Gastrocnemius medialis (tissue), 4 donors: ENCODE measurements at regions of chr3 and their contacts with region 1.

Region 1: DNA sequence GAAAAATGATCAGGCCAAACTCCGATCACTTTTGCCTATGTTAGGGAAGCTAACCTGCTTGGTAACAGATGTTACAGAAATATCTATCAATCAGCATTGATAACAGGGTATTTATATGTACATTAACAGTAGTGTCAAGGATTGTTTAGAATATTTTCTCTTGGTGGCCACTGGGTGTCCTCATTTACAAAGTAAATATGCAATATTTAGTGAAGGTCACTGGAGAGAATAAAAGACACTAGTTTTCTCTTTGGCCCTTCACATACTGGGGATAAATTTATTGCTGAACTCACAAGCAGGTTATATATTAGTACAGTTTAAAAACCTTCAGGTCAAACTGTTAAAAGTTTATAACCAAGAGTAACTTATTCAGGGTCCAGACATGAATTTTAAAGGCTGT is 69.0 kb downstream of the TIGIT start:
- DNase-seq: no peak
- ATAC-seq: peak in 1 of 2 donors; percentile 16
- H3K4me3 ChIP-seq: no peak overlapping the region
- H3K27ac ChIP-seq: peak overlapping the region; percentile 79 to 83 (median 81)
- H3K4me1 ChIP-seq: peaks cover 53 to 60% of the 10 kb centered on the region in 2 donors
- H3K27me3 ChIP-seq: no peaks in the 10 kb centered on the region
- CTCF ChIP-seq: peak; percentile 36 to 57 (median 48)
- POLR2A ChIP-seq: no peak

Region 2: GRCh38 chr3:113441051-113441770 is 921.6 kb before region 1 on chr3 and contains the start of gene CFAP44:
- in situ Hi-C with region 1: no loop called
- intact Hi-C with region 1: no loop called
- DNase-seq: peak; percentile 2 to 39
- ATAC-seq: peak in 1 of 2 donors; percentile 27
- H3K4me3 ChIP-seq: peak within 1 kb of the TSS; percentile 15 to 28 (median 22)
- H3K27ac ChIP-seq: no peak within 1 kb of the TSS
- H3K4me1 ChIP-seq: no peaks in the 10 kb centered on the region
- H3K27me3 ChIP-seq: no peaks in the 10 kb centered on the region
- CTCF ChIP-seq: no peak
- POLR2A ChIP-seq: no peak
- total RNA-seq, gene CFAP44: 0.40 to 2.3 (median 0.97) TPM

Region 3: GRCh38 chr3:113745273-113746068 is 617.3 kb before region 1 on chr3:
- in situ Hi-C with region 1: no loop called
- intact Hi-C with region 1: no loop called
- DNase-seq: peak; percentile 81 to 86
- ATAC-seq: peak; percentile 69 to 81
- H3K4me3 ChIP-seq: peak overlapping the region; percentile 87 to 97 (median 92)
- H3K27ac ChIP-seq: peak overlapping the region; percentile 97 to 100 (median 98)
- H3K4me1 ChIP-seq: peaks cover 62 to 67% of the 10 kb centered on the region in 2 donors
- H3K27me3 ChIP-seq: no peaks in the 10 kb centered on the region
- CTCF ChIP-seq: peak; percentile 49 to 64 (median 57)
- POLR2A ChIP-seq: peak in 1 of 2 donors; percentile 39

Region 4: GRCh38 chr3:114093596-114093995 is 269.2 kb before region 1 on chr3:
- in situ Hi-C with region 1: no loop called
- intact Hi-C with region 1: no loop called
- DNase-seq: peak in 1 of 2 donors; percentile 12
- ATAC-seq: no peak
- H3K4me3 ChIP-seq: no peak overlapping the region
- H3K27ac ChIP-seq: no peak overlapping the region
- H3K4me1 ChIP-seq: peaks cover 0 to 5% of the 10 kb centered on the region in 2 donors
- H3K27me3 ChIP-seq: no peaks in the 10 kb centered on the region
- CTCF ChIP-seq: no peak
- POLR2A ChIP-seq: no peak

Region 5: DNA sequence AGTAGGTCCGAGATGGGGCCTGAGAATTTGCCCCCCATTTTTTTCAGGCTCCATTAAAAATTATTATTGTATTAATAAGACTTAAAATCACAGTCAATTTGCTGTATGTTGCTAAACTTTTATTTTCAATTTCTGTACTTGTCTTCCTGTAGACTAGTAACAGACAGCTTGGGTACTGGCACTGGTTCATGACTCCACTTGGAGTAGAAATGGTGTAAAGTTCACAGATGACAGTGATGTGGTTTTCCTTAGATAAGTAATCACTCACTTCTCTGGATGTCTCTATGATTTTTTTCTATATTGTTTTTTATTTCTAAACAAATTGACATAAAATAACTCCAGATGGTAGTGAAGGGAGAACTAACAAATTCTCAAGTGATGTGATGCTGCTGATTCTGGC is 109.9 kb before region 1 on chr3:
- in situ Hi-C with region 1: no loop called
- intact Hi-C with region 1: no loop called
- DNase-seq: no peak
- ATAC-seq: no peak
- H3K4me3 ChIP-seq: no peak overlapping the region
- H3K27ac ChIP-seq: no peak overlapping the region
- H3K4me1 ChIP-seq: no peaks in the 10 kb centered on the region
- H3K27me3 ChIP-seq: no peaks in the 10 kb centered on the region
- CTCF ChIP-seq: no peak
- POLR2A ChIP-seq: no peak

Region 6: GRCh38 chr3:114418724-114419543 is 56.1 kb after region 1 on chr3:
- in situ Hi-C with region 1: no loop called
- intact Hi-C with region 1: loop called (anchors 2 kb)
- DNase-seq: no peak
- ATAC-seq: peak; percentile 78 to 90
- H3K4me3 ChIP-seq: peak overlapping the region; percentile 12 to 48 (median 20)
- H3K27ac ChIP-seq: peak overlapping the region; percentile 53 to 79 (median 72)
- H3K4me1 ChIP-seq: peaks cover 83 to 93% of the 10 kb centered on the region in 2 donors
- H3K27me3 ChIP-seq: no peaks in the 10 kb centered on the region
- CTCF ChIP-seq: peak; percentile 85 to 97 (median 92)
- POLR2A ChIP-seq: no peak

Region 7: DNA sequence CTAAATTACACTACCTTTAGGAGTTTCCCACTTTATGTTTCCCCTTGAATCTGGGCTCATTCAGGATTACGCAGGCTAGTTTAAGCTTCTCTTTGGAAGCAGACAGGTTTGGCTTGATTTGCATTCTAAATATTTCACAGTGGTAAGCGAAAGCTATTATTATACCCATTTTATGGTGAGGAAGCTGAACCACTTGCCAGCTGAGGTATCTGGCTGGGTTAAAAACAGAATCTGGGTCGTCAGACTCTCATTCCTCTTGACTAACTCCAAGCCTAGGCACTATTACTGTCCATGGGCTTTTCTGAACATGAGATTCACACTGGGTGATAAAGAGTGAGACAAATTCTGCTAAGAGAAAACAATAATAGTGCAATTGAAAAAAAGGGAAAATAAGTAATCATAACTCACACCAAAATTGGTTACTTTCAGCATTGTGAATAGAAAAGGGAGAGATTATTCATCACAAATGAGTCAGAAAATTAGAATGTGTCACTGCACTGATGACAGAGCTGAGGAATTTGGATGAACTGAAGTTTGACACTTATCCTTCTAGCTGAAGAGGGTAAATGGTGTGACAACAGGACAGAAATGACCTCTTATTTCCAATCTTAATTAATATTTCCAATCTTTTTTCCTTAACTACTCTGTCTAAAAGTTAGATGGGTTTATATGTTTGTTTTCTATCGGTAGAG is 142.3 kb after region 1 on chr3:
- in situ Hi-C with region 1: no loop called
- intact Hi-C with region 1: loop called (anchors 5 kb)
- DNase-seq: no peak
- ATAC-seq: peak in 1 of 2 donors; percentile 10
- H3K4me3 ChIP-seq: no peak overlapping the region
- H3K27ac ChIP-seq: peak overlapping the region; percentile 75 to 81 (median 78)
- H3K4me1 ChIP-seq: peaks cover 67 to 83% of the 10 kb centered on the region in 2 donors
- H3K27me3 ChIP-seq: no peaks in the 10 kb centered on the region
- CTCF ChIP-seq: no peak
- POLR2A ChIP-seq: no peak

Region 8: GRCh38 chr3:114899186-114899931 is 536.5 kb after region 1 on chr3:
- in situ Hi-C with region 1: no loop called
- intact Hi-C with region 1: loop called (anchors 10 kb)
- DNase-seq: peak; percentile 40 to 63
- ATAC-seq: peak; percentile 88 to 93
- H3K4me3 ChIP-seq: peak overlapping the region in 3 of 4 donors; percentile 2 to 32 (median 22)
- H3K27ac ChIP-seq: peak overlapping the region; percentile 64 to 78 (median 68)
- H3K4me1 ChIP-seq: peaks cover 52 to 56% of the 10 kb centered on the region in 2 donors
- H3K27me3 ChIP-seq: no peaks in the 10 kb centered on the region
- CTCF ChIP-seq: no peak
- POLR2A ChIP-seq: no peak

Region 9: DNA sequence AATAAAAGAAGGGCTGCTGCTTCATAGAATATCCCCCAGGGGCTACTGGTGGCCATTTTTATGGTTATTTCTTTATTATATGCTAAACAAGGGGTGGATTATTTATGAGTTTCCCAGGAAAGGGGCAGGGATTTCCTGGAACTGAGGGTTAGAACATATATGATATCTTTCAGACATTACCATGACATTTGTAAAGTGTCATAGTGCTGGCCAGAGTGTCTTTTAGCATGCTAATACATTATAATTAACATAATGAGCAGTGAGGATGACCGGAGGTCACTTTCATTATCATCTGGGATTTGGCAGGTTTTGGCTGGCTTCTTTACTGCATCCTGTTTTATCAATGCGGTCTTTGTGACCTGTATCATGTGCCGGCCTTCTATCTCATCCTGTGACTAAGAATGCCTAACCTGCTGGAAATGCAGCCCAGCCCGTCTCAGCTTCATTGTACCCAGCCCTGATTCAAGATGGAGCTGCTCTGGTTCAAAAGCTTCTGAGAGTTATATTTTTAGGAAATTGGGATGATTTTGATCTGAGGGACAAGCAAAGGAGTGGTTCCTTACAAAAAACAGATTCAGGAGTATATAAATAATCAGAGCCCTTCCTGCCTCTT is 793.3 kb after region 1 on chr3:
- in situ Hi-C with region 1: loop called in 1 of 4 experiments (anchors 25 kb)
- intact Hi-C with region 1: loop called (anchors 10 kb)
- DNase-seq: no peak
- ATAC-seq: no peak
- H3K4me3 ChIP-seq: no peak overlapping the region
- H3K27ac ChIP-seq: no peak overlapping the region
- H3K4me1 ChIP-seq: no peaks in the 10 kb centered on the region
- H3K27me3 ChIP-seq: no peaks in the 10 kb centered on the region
- CTCF ChIP-seq: no peak
- POLR2A ChIP-seq: no peak

Region 10: GRCh38 chr3:115169808-115170207 is 807.0 kb after region 1 on chr3:
- in situ Hi-C with region 1: loop called in 1 of 4 experiments (anchors 25 kb)
- intact Hi-C with region 1: no loop called
- DNase-seq: no peak
- ATAC-seq: no peak
- H3K4me3 ChIP-seq: no peak overlapping the region
- H3K27ac ChIP-seq: no peak overlapping the region
- H3K4me1 ChIP-seq: no peaks in the 10 kb centered on the region
- H3K27me3 ChIP-seq: no peaks in the 10 kb centered on the region
- CTCF ChIP-seq: peak in 4 of 5 experiments; percentile 15 to 57 (median 42)
- POLR2A ChIP-seq: no peak